Activated CD8-positive, alpha-beta T cell treated with anti-CD3 and anti-CD28 coated beads, Interleukin-2, amount 10 ng/mL, durations not matched to agents 7 days and 5 days (primary cell): ENCODE measurements at regions of chr3 and their contacts with region 1.

Region 1: GRCh38 chr3:124688581-124689454 is 41.4 kb upstream of the UMPS start:
- DNase-seq: peak; percentile 88
- ATAC-seq: peak; percentile 95
- H3K4me3 Mint-ChIP-seq: no peak overlapping the region
- H3K27ac Mint-ChIP-seq: no peak overlapping the region
- H3K4me1 Mint-ChIP-seq: peaks cover 25% of the 10 kb centered on the region
- H3K27me3 Mint-ChIP-seq: peaks cover 32% of the 10 kb centered on the region

Region 2: DNA sequence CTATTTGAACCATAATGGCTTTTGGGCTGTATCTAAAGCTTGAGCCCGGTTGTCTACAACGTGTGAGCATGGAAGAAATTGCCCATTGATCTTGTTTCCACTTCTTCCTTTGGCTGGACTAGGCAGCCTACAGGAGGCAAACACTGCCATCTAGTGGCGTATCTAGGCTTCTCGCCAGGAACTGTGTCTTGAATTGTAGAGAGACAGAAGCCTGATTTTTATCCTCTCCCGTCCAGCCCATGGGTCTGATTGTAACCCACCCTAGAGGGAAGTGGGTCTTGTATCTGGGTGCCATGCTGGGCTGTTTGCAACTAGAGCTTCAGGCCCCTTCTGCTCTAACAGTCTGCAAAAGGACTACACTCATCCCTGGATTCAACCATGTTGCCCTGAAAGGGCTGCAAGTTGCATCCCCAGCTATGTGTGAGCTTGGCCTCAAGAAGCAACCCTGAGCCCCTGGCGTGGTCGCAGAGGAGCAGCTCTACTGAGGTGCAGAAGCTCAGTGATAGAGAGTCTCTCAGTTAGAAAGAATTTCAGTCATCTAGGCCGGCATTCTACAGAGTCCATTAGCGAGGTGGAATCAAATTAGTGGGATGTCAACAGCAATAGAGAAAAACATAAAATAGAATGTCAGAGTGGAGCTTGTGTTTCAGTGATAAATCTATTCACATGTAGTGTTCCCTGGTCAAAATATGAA is 128.8 kb before region 1 on chr3:
- CTCF ChIA-PET with region 1: interaction called, 56 read pairs
- POLR2A ChIA-PET with region 1: interaction called, 6 read pairs
- DNase-seq: peak; percentile 77
- ATAC-seq: peak; percentile 84
- H3K4me3 Mint-ChIP-seq: no peak overlapping the region
- H3K27ac Mint-ChIP-seq: no peak overlapping the region
- H3K4me1 Mint-ChIP-seq: no peaks in the 10 kb centered on the region
- H3K27me3 Mint-ChIP-seq: peaks cover 60% of the 10 kb centered on the region

Region 3: GRCh38 chr3:124620600-124621063 is 68.2 kb before region 1 on chr3:
- CTCF ChIA-PET with region 1: interaction called, 26 read pairs
- POLR2A ChIA-PET with region 1: no interaction called
- DNase-seq: peak; percentile 67
- ATAC-seq: peak; percentile 91
- H3K4me3 Mint-ChIP-seq: peak overlapping the region; percentile 53
- H3K27ac Mint-ChIP-seq: peak overlapping the region; percentile 86
- H3K4me1 Mint-ChIP-seq: peaks cover 41% of the 10 kb centered on the region
- H3K27me3 Mint-ChIP-seq: peaks cover 3% of the 10 kb centered on the region

Region 4: DNA sequence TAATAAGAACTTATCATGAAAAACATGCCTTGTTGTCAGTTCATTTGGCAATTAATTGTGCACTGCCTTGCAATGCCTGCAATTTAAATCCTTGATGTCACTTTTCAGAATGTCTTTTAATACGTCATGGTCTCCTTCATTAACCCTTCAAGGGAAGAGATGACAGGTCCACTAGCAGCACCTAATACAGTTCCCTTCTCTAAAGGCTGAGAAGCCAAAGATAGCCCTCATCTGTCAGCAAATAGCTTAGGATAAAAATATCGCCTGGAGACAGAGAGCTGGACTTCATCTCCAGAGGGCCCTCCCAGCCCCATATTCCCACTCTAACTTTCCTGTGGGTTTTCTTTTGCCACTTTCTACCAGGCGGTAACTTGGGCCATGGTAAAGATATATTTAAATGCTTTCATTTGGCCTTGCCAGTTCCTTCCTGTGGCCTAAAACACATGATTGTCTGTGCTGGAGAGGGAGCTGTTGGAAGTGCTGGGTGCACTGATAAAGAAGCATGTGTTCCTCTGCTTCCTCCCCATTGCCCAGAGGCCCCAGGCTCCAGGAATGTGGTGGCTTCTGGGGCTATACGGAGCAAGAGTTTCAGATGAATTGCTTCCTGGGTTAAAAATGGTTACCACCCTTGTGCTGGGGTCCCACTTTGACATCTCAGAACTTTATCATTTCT is 34.9 kb before region 1 on chr3:
- CTCF ChIA-PET with region 1: interaction called, 11 read pairs
- POLR2A ChIA-PET with region 1: no interaction called
- DNase-seq: no peak
- ATAC-seq: no peak
- H3K4me3 Mint-ChIP-seq: no peak overlapping the region
- H3K27ac Mint-ChIP-seq: no peak overlapping the region
- H3K4me1 Mint-ChIP-seq: peaks cover 55% of the 10 kb centered on the region
- H3K27me3 Mint-ChIP-seq: peaks cover 5% of the 10 kb centered on the region

Region 5: DNA sequence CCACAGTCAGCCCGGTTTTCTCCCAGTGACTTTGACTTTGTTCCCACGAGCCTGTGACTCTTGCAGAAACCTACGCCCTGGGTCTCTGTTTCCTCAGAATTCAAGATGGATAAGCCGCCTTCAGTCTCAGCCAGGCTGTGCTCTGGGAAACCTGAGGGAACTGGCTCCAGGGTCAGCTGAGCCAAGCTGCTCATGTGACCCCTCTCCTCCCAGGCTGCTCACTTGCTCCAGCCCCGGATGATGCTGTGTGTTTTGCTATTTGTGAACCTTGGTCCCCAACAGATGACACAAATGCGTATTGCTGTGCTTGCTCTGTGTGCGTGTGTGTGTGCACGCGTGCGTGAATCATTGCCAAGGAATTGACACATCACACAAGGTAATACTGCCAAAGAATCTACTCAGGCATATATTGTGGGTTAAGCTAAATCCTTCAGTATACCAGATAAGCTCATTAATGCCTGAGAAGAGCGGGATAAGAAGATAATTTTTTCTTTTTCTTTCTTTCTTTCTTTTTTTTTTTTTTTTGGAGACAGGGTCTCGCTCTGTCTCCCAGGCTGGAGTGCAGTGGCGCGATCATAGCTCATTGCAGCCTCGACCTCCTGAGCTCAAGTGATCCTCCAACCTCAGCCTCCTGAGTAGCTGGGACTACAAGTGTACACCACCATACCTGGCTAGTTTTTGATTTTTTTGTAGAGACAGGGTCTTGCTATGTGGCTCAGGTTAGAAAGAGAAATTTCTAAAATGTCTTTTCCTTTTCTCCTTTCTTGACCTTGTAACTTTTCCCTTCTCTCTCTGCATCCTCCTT is 12.3 kb after region 1 on chr3:
- CTCF ChIA-PET with region 1: interaction called, 11 read pairs
- POLR2A ChIA-PET with region 1: no interaction called
- DNase-seq: no peak
- ATAC-seq: no peak
- H3K4me3 Mint-ChIP-seq: no peak overlapping the region
- H3K27ac Mint-ChIP-seq: no peak overlapping the region
- H3K4me1 Mint-ChIP-seq: no peaks in the 10 kb centered on the region
- H3K27me3 Mint-ChIP-seq: peaks cover 36% of the 10 kb centered on the region